ENCODE measurements at regions of chr10 and their contacts with region 1.

Region 1: GRCh38 chr10:8059959-8060703 is 5.6 kb downstream of the GATA3 start:
- DNase-seq: peak; percentile 73
- H3K4me3 Mint-ChIP-seq: peak overlapping the region; percentile 98
- H3K27ac Mint-ChIP-seq: peak overlapping the region; percentile 96
- H3K4me1 Mint-ChIP-seq: peaks cover 74% of the 10 kb centered on the region
- H3K27me3 Mint-ChIP-seq: peaks cover 1% of the 10 kb centered on the region

Region 2: DNA sequence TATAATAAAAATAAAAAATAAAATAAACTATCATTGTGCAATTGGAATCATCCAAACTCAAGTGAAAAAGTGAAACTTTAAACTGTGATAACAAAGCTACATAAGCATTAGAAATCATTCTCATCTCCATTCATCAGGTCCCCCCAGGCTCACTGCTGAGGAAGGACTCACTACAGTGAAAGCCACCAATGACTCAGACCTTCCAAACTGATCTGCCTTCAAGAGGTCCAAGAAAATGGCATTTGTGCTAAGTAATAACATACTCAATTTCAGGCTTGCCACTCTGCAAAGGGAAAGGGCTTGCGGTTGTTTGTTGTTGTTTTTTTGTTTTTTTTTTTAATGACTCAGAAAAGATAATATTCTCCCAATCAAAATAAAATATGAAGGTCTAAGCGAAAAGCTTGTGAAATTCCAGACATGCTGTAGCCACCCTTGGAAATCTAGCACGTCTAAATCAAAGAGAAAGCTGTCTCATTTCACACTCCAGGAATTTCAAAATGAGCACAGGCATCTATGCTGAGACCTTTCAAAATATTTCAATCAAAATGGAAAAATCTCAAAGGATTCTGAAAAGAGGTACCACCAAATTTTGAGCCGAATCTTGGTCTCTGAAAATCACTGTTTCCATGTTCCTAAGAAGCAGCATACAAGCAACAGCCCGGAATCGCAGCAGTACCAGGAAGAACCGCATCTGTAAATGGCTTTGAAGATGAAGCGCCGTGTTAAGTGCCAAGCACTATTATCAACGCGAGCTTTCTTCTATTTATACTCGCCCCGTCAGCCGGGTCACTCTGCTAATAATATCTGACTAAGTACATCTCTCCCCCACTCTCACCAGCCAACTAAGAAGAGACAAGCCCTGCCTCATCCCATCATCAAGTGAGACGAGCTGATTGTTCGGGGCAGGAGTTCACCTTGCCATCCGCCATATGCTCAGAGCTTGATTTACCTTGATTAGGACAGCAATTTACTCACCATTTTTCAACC is 662.8 kb before region 1 on chr10:
- intact Hi-C with region 1: no loop called
- DNase-seq: no peak
- H3K4me3 Mint-ChIP-seq: peak overlapping the region; percentile 58
- H3K27ac Mint-ChIP-seq: peak overlapping the region; percentile 53
- H3K4me1 Mint-ChIP-seq: peaks cover 70% of the 10 kb centered on the region
- H3K27me3 Mint-ChIP-seq: no peaks in the 10 kb centered on the region

Region 3: GRCh38 chr10:7787857-7788638 is 272.1 kb before region 1 on chr10 and contains the starts of genes ATP5F1C and KIN:
- intact Hi-C with region 1: loop called (anchors 5 kb)
- DNase-seq: peak; percentile 97
- H3K4me3 Mint-ChIP-seq: no peak within 1 kb of the TSS
- H3K27ac Mint-ChIP-seq: peak within 1 kb of the TSS; percentile 75
- H3K4me1 Mint-ChIP-seq: peaks cover 47% of the 10 kb centered on the region
- H3K27me3 Mint-ChIP-seq: no peaks in the 10 kb centered on the region
- total RNA-seq, gene ATP5F1C: 316 and 329 TPM in 2 replicates
- total RNA-seq, gene KIN: 11.0 and 12.3 TPM in 2 replicates

Region 4: GRCh38 chr10:8017277-8017676 is 42.9 kb before region 1 on chr10:
- intact Hi-C with region 1: no loop called
- DNase-seq: no peak
- H3K4me3 Mint-ChIP-seq: no peak overlapping the region
- H3K27ac Mint-ChIP-seq: no peak overlapping the region
- H3K4me1 Mint-ChIP-seq: no peaks in the 10 kb centered on the region
- H3K27me3 Mint-ChIP-seq: no peaks in the 10 kb centered on the region

Region 5: GRCh38 chr10:8159341-8160165 is 99.4 kb after region 1 on chr10:
- intact Hi-C with region 1: no loop called
- DNase-seq: no peak
- H3K4me3 Mint-ChIP-seq: no peak overlapping the region
- H3K27ac Mint-ChIP-seq: no peak overlapping the region
- H3K4me1 Mint-ChIP-seq: peaks cover 18% of the 10 kb centered on the region
- H3K27me3 Mint-ChIP-seq: peaks cover 16% of the 10 kb centered on the region

Region 6: GRCh38 chr10:8254350-8254749 is 194.2 kb after region 1 on chr10:
- intact Hi-C with region 1: loop called (anchors 1 kb)
- DNase-seq: no peak
- H3K4me3 Mint-ChIP-seq: peak overlapping the region; percentile 38
- H3K27ac Mint-ChIP-seq: peak overlapping the region; percentile 77
- H3K4me1 Mint-ChIP-seq: peaks cover 48% of the 10 kb centered on the region
- H3K27me3 Mint-ChIP-seq: no peaks in the 10 kb centered on the region

Region 7: GRCh38 chr10:8331883-8332729 is 272.0 kb after region 1 on chr10:
- intact Hi-C with region 1: loop called (anchors 1 kb)
- DNase-seq: peak; percentile 78
- H3K4me3 Mint-ChIP-seq: peak overlapping the region; percentile 79
- H3K27ac Mint-ChIP-seq: peak overlapping the region; percentile 75
- H3K4me1 Mint-ChIP-seq: peaks cover 58% of the 10 kb centered on the region
- H3K27me3 Mint-ChIP-seq: peaks cover 6% of the 10 kb centered on the region

Region 8: DNA sequence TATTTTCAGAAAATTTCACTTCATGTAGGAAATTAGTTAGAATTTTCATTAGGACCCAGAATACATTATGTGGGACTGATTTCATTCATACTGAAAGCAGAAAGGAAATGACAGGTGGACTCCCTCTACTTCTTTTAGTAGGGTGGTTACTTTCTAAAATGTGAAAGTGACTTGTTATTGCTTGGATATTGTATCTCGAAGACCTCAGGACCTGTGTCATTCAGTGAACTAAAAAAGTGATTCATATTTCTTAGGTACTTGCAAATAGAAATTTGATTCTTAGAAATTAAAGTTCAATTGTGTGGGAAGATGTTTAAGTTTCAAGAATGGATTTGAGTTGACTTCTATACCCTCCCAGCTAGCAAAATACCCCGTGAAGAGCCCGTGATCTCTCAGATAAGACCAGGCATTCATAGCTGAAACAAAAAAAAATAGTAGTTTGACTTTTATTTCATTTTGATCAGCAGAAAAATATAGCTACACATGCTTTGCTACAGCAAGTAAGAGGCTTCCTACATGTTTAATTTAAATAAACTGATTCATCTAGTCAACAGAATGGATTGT is 1031.5 kb after region 1 on chr10:
- intact Hi-C with region 1: loop called (anchors 5 kb)
- DNase-seq: no peak
- H3K4me3 Mint-ChIP-seq: no peak overlapping the region
- H3K27ac Mint-ChIP-seq: no peak overlapping the region
- H3K4me1 Mint-ChIP-seq: peaks cover 11% of the 10 kb centered on the region
- H3K27me3 Mint-ChIP-seq: peaks cover 4% of the 10 kb centered on the region